Dorsolateral prefrontal cortex (tissue), 120 donors: ENCODE measurements at regions of chr19 and their contacts with region 1.

Region 1: DNA sequence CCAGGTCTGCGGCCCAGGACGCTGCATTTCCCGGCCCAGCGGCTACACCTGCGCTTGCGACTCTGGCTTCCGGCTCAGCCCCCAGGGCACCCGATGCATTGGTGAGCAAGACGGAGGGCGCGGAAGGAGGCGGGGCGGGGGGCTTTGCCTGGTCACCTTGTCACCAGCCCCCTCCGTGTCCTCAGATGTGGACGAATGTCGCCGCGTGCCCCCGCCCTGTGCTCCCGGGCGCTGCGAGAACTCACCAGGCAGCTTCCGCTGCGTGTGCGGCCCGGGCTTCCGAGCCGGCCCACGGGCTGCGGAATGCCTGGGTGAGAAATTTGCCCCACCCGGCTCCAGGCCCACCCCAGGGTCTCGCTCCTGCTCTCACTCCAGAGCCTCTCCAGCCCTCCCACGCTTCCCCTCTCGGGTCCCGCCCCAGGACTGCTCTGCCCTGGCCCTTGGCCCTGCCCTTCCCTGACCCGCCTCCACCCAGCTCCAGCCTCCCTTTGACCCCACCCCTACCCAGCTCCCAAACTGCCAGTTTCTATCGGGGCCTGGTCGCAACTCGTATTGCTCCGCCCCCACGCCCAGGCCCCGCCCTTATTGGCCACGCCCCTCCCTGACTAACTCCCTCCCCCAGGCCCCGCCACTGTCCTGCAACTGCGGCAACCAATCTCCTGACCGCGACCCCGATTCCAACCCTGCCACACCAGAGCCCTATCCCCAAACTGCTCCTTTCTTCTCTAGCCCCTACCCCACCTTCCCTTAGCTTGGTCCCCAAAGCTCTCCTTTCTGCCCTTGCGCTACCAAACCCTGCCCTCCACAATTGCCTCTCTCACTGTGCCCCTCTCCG is 8.6 kb downstream of the LTBP4 start:
- DNase-seq: peak in 8 of 10 donors; percentile 47 to 81 (median 66)
- H3K4me3 ChIP-seq: peak overlapping the region; percentile 7 to 65 (median 46)
- H3K27ac ChIP-seq: peak overlapping the region in 42 of 59 donors; percentile 1 to 83 (median 62)
- H3K27me3 ChIP-seq: peaks cover 0 to 20% (median 0%) of the 10 kb centered on the region in 45 donors
- CTCF ChIP-seq: no peak

Region 2: DNA sequence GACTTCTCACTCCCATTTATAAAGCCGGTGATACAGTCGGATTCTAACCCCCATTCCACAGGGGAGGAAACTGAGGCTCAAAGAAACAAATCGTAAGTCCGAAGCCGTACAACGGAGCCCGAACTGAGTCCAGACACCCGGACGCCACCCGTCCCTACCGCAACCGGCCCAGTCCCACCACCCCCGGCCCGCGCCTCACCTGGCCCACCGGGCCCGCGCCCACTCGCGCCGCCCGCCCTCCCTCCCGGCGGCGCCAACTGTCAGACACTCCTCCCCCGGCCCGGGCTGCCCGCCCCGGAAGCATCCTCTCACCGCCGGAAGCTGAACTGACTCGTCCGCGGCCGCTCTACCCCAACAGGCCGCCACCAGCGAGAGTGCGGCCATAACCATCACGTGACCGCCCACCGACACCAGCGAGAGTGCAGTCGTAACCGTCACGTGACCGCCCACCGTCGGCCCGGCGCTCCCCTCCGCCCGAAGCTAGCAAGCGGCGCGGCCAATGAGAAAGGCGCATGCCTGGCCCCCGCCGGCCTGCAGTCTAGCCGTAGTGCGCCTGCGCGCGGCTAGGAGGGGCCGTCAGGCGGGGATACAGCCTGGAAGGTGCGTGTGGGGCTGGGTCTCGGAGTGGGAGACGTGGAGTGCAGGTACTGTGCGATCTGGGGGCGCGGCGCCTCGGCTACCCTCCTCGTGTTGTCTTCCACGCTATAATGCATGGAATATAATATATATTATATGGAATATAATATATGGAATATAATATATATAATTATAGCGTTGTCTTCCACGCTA is 261.5 kb before region 1 on chr19 and contains the starts of genes C19orf47 and PLD3:
- intact Hi-C with region 1: no loop called
- DNase-seq: peak; percentile 99 to 100 (median 100)
- H3K4me3 ChIP-seq: peak within 1 kb of the TSS; percentile 55 to 98 (median 86)
- H3K27ac ChIP-seq: peak within 1 kb of the TSS in 58 of 59 donors; percentile 4 to 95 (median 84)
- H3K27me3 ChIP-seq: no peaks in the 10 kb centered on the region
- CTCF ChIP-seq: peak in 26 of 56 donors; percentile 6 to 54 (median 29)
- total RNA-seq, gene C19orf47: 26.8 to 54.6 (median 37.4) TPM
- total RNA-seq, gene PLD3: 322 to 718 (median 553) TPM

Region 3: DNA sequence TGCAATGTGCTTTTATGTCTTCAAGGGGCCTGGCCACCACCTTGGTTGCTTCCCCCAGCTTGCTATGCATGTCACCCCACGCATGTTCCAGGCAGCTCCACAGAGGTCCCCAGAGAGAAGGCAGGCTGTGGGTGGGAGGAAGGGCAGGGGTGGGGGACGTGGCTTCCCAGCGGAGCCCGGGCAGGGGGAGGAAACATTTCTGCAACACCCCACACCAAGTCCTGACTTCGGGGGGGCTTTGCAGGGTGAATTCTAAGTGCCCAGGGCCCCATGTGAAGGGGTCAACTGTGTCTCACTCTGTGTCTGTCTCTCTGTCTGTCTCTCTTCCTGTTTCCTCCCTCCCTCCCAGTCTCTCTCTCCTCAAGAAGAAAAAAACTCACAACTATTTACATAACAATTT is 31.0 kb after region 1 on chr19:
- intact Hi-C with region 1: loop called in 1 of 2 experiments (anchors 2 kb)
- DNase-seq: no peak
- H3K4me3 ChIP-seq: no peak overlapping the region
- H3K27ac ChIP-seq: no peak overlapping the region
- H3K27me3 ChIP-seq: peaks cover 0 to 3% (median 0%) of the 10 kb centered on the region in 45 donors
- CTCF ChIP-seq: no peak

Region 4: DNA sequence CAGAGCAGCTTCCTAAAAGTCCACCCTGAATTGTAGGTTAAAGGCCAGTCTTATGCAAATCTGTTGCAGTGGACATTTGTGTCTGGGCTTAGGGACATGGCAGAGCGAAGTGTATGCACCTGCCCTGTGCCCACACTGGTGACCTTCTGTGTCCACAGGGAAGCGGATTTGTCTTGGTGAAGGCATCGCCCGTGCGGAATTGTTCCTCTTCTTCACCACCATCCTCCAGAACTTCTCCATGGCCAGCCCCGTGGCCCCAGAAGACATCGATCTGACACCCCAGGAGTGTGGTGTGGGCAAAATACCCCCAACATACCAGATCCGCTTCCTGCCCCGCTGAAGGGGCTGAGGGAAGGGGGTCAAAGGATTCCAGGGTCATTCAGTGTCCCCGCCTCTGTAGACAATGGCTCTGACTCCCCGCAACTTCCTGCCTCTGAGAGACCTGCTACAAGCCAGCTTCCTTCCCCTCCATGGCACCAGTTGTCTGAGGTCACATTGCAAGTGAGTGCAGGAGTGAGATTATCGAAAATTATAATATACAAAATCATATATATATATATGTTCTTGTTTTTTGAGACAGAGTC is 406.8 kb after region 1 on chr19:
- intact Hi-C with region 1: no loop called
- DNase-seq: no peak
- H3K4me3 ChIP-seq: no peak overlapping the region
- H3K27ac ChIP-seq: no peak overlapping the region
- H3K27me3 ChIP-seq: peaks cover 0 to 25% (median 8%) of the 10 kb centered on the region in 45 donors
- CTCF ChIP-seq: no peak